Calu3 (cell line): ENCODE measurements at regions of chr5 and their contacts with region 1.

Region 1: DNA sequence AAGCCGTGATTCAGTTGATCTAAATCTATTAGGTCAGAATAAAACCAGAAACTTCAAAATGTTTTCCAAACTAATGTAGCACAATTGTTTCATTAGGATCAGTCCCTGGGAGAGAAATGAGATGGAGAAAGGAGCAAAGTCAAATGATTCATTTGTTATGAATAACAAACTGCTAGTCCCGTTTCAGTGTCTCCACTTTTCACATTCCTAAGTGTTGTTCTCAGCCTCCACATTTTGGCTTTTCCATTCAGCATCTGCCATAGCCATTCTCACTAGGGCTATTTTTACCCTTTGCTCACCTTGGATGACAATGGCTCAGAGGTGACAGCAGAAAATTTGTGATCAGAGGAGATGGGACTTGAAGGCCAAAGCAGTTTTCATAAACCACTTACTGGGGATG is 314.1 kb upstream of the KIF2A start:
- DNase-seq: no peak
- H3K4me3 Mint-ChIP-seq: no peak overlapping the region
- H3K27ac Mint-ChIP-seq: no peak overlapping the region
- H3K4me1 Mint-ChIP-seq: peaks cover 14% of the 10 kb centered on the region
- H3K27me3 Mint-ChIP-seq: peaks cover 20% of the 10 kb centered on the region
- CTCF ChIP-seq: no peak

Region 2: GRCh38 chr5:62115014-62115413 is 123.1 kb after region 1 on chr5:
- CTCF ChIA-PET with region 1: no interaction called
- intact Hi-C with region 1: no loop called
- DNase-seq: no peak
- H3K4me3 Mint-ChIP-seq: no peak overlapping the region
- H3K27ac Mint-ChIP-seq: no peak overlapping the region
- H3K4me1 Mint-ChIP-seq: no peaks in the 10 kb centered on the region
- H3K27me3 Mint-ChIP-seq: peaks cover 99% of the 10 kb centered on the region
- CTCF ChIP-seq: no peak

Region 3: DNA sequence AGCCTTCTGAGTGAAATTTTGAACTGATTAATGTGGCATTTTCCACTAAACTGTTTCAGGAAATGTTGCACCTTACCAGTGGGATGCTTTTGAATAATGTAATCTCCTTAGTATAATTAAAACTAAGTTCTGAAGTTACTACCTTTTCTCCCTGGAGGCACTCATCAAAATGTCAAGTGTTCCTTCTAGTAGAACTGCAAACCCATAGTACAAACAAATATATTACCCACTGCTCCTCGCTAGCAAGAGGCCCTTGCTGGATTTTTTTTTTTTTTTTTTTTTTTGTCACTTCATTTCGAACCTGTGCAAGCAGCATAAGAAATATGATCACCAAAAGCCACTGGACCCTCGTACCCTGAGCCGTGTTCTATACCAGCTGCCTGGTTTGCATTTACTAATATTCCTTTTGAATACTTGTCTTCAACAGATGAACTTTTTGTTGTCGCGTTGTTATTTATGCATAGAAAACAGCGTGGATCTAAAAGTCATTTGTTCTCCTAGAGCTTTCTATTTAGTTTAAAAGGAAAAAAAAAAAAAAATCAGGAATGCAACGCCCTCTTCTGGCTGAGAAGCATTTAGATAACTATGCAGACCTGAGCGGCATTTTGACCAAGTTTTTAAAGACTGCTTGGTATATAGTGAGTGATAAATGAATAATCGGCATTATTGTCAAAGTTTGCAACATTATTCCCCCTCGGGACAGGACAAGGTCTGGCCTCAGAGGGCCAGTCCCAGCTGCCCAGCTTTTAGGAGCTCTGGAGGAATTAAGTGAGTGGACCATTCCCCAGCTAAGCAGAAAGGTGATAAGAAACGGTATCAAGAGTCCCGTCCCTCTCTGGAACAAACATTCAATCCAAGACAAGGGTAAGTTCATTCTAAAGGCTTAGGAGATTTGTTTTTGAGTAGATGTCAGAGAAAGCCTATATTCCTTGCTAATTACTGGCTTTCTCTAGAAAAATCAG is 151.7 kb after region 1 on chr5:
- CTCF ChIA-PET with region 1: interaction called, 3 read pairs
- intact Hi-C with region 1: loop called (anchors 10 kb)
- DNase-seq: peak; percentile 6
- H3K4me3 Mint-ChIP-seq: no peak overlapping the region
- H3K27ac Mint-ChIP-seq: no peak overlapping the region
- H3K4me1 Mint-ChIP-seq: no peaks in the 10 kb centered on the region
- H3K27me3 Mint-ChIP-seq: peaks cover 78% of the 10 kb centered on the region
- CTCF ChIP-seq: peak; percentile 25